HepG2 (cell line): ENCODE measurements at regions of chr13 and their contacts with region 1.

Region 1: DNA sequence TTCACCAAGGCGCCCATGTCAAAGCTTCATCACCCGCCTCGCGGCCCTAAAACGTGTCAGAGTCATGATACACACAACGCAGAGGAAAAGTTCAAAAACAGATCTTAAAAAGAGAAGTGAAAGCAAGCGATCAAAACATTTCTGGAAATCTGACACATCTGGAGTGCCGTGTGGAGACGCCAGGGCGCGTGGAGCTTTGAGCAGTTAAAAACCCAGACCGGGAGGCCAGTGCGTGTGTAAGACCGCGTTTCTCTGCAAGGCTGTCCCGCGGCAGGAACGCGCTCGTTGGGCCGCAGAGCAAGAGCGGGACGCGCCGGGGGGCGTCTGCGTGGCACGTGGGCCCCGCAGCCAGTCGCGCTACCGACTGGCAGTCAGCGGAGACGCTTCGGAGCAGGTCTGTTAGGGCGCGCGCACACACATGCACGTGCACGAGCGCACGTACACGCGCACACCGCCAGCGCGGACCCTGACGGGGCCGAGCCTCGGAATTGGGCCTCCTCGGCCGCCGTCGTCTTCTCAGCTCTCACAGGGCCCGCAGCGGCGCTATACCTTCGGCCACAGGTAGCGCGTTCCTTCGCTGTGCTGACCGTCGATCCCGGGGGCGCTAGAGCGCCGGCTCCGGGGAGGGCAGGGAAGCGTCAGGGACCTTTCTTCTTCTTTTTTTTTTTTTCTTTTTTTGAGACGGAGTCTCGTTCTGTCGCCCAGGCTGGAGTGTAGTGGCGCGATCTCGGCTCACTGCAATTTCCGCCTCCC is 35.8 kb downstream of the RNF6 start:
- DNase-seq: peak; percentile 83
- ATAC-seq: peak; percentile 95
- H3K4me3 ChIP-seq: peak overlapping the region; percentile 57 to 79 (median 63)
- H3K27ac ChIP-seq: peak overlapping the region; percentile 57
- H3K4me1 ChIP-seq: peaks cover 17% of the 10 kb centered on the region; the same call in 1 of the 2 replicates
- H3K27me3 ChIP-seq: no peaks in the 10 kb centered on the region
- CTCF ChIP-seq: peak; percentile 88
- EP300 ChIP-seq: no peak
- POLR2A ChIP-seq: peak; percentile 36 to 63; a peak in 3 of 4 replicates
- RAD21 ChIP-seq: peak; percentile 77

Region 2: DNA sequence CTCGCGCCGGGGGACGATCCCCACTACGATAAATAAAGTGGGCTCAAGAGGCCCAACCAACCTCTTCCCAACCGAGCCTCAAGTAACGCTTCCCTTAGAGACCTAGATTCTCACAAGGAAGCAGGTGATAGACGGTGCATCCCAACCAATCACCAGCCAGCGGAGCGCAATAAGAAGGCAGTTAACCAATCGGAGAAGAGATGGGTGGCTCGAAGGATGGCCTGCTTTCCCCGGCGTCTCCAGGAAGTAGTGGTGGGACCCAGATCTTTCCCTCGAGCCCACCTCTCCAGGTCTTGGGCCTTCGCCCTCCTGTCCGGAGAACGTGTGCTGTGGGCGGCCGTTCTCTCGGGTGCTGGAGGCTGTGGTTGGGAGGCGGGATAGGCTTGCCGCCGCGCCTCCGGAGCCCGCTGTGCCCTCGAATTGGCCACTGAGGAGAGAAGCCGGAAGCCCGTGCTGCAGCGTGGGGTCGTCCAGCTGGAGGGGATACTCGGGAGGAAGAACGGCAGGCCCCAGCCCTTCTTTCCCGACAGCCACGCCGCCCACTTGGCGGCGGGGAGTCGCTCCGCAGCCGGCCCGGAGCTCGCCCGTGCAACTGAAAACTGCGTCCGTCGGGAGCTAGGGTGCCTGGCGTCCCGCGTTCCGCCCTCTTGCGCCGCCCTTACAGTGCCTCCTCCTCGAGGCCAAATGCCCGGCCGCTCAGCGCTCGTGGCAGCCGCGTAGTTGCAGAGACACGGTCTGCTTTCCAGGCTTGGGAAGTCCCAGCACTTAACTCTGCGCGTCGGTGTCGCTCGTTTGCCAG is 35.6 kb after region 1 on chr13 and contains the start of gene RNF6:
- CTCF ChIA-PET with region 1: no interaction called
- POLR2A ChIA-PET with region 1: interaction called, 5 read pairs
- in situ Hi-C with region 1: no loop called
- intact Hi-C with region 1: loop called (anchors 2 kb)
- DNase-seq: peak; percentile 94
- ATAC-seq: peak; percentile 98
- H3K4me3 ChIP-seq: peak within 1 kb of the TSS; percentile 95 to 99 (median 97)
- H3K27ac ChIP-seq: peak within 1 kb of the TSS; percentile 97
- H3K4me1 ChIP-seq: peaks cover 27% of the 10 kb centered on the region
- H3K27me3 ChIP-seq: no peaks in the 10 kb centered on the region; a peak in 1 of 5 replicates
- CTCF ChIP-seq: peak; percentile 35
- EP300 ChIP-seq: 0 out of 4 replicates have a peak, but pooled peaks of 1 of the 2 experiments have one; percentile 2
- POLR2A ChIP-seq: peak; percentile 65 to 92
- RAD21 ChIP-seq: 0 out of 2 replicates have a peak, but pooled peaks have one; percentile 26
- total RNA-seq, gene RNF6: 36.8 and 57.0 TPM in 2 replicates

Region 3: DNA sequence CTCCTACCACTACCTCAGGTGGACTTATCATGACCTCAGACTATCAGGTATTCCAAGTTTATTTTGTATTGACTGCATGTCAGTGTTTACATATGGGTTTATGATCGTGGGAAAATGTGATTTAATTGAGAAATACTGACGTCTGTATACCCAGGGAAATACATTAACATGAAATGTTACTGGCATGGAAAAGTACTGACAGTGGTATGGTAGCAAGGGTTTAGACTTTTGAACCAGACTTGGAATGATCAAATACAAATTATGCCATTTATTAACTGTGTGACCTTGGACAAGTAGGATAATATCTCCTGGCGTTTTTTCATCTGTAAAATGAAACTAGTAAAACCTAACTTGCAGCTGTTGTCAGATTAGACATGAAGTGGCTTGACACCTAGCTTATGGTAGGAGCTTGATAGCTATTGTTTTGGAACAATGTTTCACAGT is 215.3 kb after region 1 on chr13:
- CTCF ChIA-PET with region 1: no interaction called
- POLR2A ChIA-PET with region 1: no interaction called
- in situ Hi-C with region 1: no loop called
- intact Hi-C with region 1: loop called (anchors 5 kb)
- DNase-seq: peak; percentile 74
- ATAC-seq: peak; percentile 80
- H3K4me3 ChIP-seq: no peak overlapping the region
- H3K27ac ChIP-seq: peak overlapping the region; percentile 61
- H3K4me1 ChIP-seq: peaks cover 25% of the 10 kb centered on the region
- H3K27me3 ChIP-seq: no peaks in the 10 kb centered on the region
- CTCF ChIP-seq: no peak
- EP300 ChIP-seq: peak in 1 of 2 experiments; percentile 22; a peak in 1 of 4 replicates
- POLR2A ChIP-seq: no peak
- RAD21 ChIP-seq: no peak

Region 4: DNA sequence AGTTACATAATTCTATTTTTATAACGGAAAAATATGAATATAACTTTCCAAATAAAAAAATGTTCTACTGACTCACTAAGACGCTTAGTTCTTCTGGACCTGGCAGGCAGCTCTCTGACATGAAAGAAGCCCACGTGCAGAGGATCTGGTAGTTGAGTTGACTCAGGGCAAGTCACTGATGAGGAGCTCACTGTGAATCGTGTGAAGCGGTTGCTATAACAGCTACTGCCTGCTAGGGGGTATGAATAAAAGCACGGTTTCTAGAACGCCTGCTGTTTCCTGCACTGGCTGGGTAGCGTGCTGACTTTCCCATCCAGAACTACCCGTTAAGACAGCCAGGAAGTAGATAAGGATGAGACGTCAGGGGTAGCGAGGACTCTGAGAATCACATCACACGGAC is 316.5 kb after region 1 on chr13:
- CTCF ChIA-PET with region 1: no interaction called
- POLR2A ChIA-PET with region 1: no interaction called
- in situ Hi-C with region 1: loop called (anchors 5 kb)
- intact Hi-C with region 1: no loop called
- DNase-seq: no peak
- ATAC-seq: peak; percentile 50; the same call in 2 of the 3 replicates
- H3K4me3 ChIP-seq: no peak overlapping the region
- H3K27ac ChIP-seq: no peak overlapping the region
- H3K4me1 ChIP-seq: no peaks in the 10 kb centered on the region
- H3K27me3 ChIP-seq: peaks cover 4 to 20% of the 10 kb centered on the region in 2 experiments; a peak in 3 of 5 replicates
- CTCF ChIP-seq: no peak
- EP300 ChIP-seq: no peak
- POLR2A ChIP-seq: no peak
- RAD21 ChIP-seq: no peak

Region 5: DNA sequence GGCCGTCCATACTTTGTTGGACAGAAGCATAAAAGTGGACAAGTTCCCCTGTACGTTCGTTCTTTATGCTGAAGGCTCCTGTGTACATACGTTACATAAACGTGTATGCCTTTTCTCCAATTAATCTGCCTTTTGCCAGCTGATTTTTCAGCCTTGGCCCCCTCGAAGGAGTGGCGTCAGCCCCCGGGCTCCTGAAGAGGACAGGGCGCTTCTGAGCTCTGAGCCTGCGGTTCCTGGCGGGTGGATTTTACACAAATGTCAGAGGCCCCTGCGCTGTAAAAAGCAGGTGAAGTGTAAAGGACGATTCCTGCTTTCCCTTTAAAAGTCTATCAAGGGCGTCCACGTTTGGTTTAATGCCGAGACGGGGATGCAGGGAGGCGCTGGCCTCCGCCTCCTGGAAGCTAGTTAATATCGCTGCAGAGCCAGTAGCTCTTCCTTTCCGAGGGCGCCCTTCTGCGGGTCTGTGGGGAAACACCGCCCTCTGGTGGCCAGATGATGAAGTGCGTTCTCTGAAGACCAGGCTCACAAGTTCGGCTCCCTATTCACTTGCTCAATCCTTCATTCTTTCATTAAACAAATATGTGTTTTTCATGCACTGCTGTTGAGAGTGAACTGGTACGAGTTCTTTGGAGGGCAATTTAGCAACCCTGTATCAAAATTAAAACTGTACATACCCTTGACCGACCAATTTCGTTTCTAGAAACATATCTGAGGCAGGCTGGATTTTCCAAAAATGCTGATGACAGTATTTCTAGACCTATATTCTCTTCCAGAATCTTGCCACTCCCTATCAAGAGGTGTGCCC is 512.3 kb after region 1 on chr13:
- CTCF ChIA-PET with region 1: interaction called, 11 read pairs
- POLR2A ChIA-PET with region 1: interaction called, 9 read pairs
- in situ Hi-C with region 1: loop called (anchors 5 kb)
- intact Hi-C with region 1: loop called (anchors 1 kb)
- DNase-seq: peak; percentile 66
- ATAC-seq: peak; percentile 81
- H3K4me3 ChIP-seq: peak overlapping the region; percentile 27 to 55 (median 27); a peak in 5 of 6 replicates
- H3K27ac ChIP-seq: no peak overlapping the region
- H3K4me1 ChIP-seq: no peaks in the 10 kb centered on the region
- H3K27me3 ChIP-seq: peaks cover 5 to 24% of the 10 kb centered on the region in 2 experiments; a peak in 4 of 5 replicates
- CTCF ChIP-seq: peak; percentile 92
- EP300 ChIP-seq: no peak
- POLR2A ChIP-seq: no peak
- RAD21 ChIP-seq: peak; percentile 89